Activated CD4-positive, alpha-beta T cell treated with anti-CD3 and anti-CD28 coated beads for 36 hours (primary cell): ENCODE measurements at regions of chr12 and their contacts with region 1.

Region 1: DNA sequence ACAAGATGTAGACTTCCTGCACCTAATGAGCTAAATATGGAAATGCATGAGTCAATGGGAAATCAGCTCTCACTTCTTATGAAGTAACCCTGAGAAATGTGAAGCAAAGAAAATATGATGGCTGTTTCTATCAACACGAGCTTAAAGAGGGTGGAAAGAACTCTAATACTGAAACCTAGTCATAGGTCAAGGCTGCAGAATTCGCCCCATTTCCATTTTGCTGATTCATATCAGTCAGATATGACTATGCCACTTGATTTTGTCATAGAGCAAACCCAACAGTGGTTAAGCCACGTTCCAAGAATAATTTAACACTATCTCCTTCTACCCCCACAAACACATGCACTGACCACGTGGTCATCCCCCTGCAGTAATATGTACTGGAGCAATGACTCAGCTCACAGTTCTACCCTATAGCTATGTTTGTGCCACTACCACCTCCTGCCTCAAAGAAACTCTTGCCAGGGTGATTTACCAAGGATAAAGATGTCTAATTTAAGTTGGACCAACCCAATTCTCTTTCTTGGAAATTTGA is 157.5 kb downstream of the TMTC3 start:
- DNase-seq: peak; percentile 79
- ATAC-seq: peak; percentile 90
- H3K4me3 Mint-ChIP-seq: no peak overlapping the region
- H3K27ac Mint-ChIP-seq: peak overlapping the region; percentile 91
- H3K4me1 Mint-ChIP-seq: peaks cover 31% of the 10 kb centered on the region
- H3K27me3 Mint-ChIP-seq: peaks cover 4% of the 10 kb centered on the region

Region 2: DNA sequence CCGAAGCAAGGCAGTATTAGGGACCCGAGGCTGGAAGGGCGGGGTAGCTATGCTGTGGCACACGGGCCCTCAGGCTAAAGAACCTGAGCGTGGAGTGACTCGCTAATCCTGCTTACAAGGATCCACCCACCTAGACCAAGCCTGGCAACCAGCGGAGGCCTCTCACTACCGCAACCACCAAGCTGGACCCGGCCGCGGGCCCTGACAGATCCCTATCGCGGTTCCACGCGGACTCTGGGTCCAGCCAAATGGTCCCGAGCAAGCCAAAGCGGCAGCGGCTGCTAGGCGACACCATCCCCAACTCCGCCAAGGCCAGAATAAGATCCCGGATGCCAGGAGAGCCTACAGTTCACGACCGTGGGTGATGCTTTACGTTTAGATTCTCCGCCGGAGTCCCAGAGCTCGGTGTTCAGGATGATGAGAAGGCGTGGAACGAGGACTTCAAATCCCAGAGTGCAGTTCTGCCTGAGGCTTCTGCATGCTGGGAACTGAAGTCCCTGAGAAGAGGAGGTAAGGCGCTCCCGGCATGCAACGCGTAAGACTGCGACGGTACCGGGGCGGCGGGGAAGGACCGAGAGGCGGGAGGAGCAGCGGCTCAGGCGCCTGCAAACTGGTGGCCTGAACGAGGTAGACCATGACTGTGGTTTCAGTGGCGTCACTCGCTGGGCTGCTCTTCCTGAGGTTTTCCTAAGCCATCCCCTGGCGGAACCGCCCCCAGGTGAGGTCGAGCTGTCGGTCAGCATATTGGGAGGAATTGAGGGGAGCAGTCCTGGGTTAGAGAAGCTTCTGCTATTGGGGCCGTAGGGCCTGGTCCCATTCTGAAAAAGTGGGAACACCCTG is 157.6 kb before region 1 on chr12 and contains the starts of genes CEP290 and TMTC3:
- CTCF ChIA-PET with region 1: interaction called, 3 read pairs
- POLR2A ChIA-PET with region 1: interaction called, 3 read pairs
- intact Hi-C with region 1: loop called (anchors 1 to 2 kb)
- DNase-seq: peak; percentile 95
- ATAC-seq: peak; percentile 98
- H3K4me3 Mint-ChIP-seq: peak within 1 kb of the TSS; percentile 94
- H3K27ac Mint-ChIP-seq: peak within 1 kb of the TSS; percentile 92
- H3K4me1 Mint-ChIP-seq: peaks cover 42% of the 10 kb centered on the region
- H3K27me3 Mint-ChIP-seq: no peaks in the 10 kb centered on the region
- total RNA-seq, gene CEP290: 15.5 to 17.0 TPM
- total RNA-seq, gene TMTC3: 5.8 to 6.2 TPM

Region 3: DNA sequence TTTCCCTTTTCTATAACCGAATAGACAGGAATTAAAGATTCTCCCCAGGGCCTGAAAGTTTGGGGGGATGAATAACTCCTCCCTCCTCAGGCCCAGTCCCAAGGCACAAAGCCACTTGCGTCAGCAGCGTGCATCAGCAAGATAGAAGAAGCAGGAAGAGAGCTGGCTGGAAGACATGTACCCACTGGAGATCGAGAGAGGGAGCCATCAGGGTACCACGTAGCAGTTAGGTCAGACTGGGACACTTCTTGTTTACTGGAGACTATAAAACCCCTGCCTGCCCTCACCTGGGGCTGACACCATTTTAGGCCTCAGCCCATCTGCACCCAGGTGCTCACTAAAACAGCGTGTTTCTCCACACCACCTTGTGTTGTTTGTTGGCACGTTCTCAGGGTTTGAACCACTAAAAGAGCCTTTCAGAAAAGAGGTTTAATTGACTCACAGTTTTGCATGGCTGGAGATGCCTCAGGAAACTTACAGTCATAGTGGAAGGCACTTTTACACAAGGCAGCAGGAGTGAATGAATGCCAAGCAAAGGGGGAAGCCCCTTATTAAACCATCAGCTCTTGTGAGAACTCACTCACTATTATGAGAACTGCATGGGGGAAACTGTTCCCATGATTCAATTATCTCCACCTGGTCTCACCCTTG is 64.3 kb before region 1 on chr12:
- CTCF ChIA-PET with region 1: interaction called, 4 read pairs
- POLR2A ChIA-PET with region 1: interaction called, 3 read pairs
- intact Hi-C with region 1: loop called (anchors 1 kb)
- DNase-seq: peak; percentile 58
- ATAC-seq: peak; percentile 85
- H3K4me3 Mint-ChIP-seq: no peak overlapping the region
- H3K27ac Mint-ChIP-seq: peak overlapping the region; percentile 78
- H3K4me1 Mint-ChIP-seq: peaks cover 36% of the 10 kb centered on the region
- H3K27me3 Mint-ChIP-seq: no peaks in the 10 kb centered on the region

Region 4: GRCh38 chr12:88393017-88393767 is 93.6 kb after region 1 on chr12:
- CTCF ChIA-PET with region 1: no interaction called
- POLR2A ChIA-PET with region 1: no interaction called
- intact Hi-C with region 1: loop called (anchors 1 kb)
- DNase-seq: no peak
- ATAC-seq: peak; percentile 37
- H3K4me3 Mint-ChIP-seq: no peak overlapping the region
- H3K27ac Mint-ChIP-seq: no peak overlapping the region
- H3K4me1 Mint-ChIP-seq: peaks cover 11% of the 10 kb centered on the region
- H3K27me3 Mint-ChIP-seq: peaks cover 11% of the 10 kb centered on the region

Region 5: GRCh38 chr12:88658009-88658408 is 358.4 kb after region 1 on chr12:
- CTCF ChIA-PET with region 1: no interaction called
- POLR2A ChIA-PET with region 1: no interaction called
- intact Hi-C with region 1: no loop called
- DNase-seq: no peak
- ATAC-seq: no peak
- H3K4me3 Mint-ChIP-seq: no peak overlapping the region
- H3K27ac Mint-ChIP-seq: no peak overlapping the region
- H3K4me1 Mint-ChIP-seq: no peaks in the 10 kb centered on the region
- H3K27me3 Mint-ChIP-seq: peaks cover 2% of the 10 kb centered on the region

Region 6: GRCh38 chr12:89494411-89495231 is 1195.0 kb after region 1 on chr12:
- CTCF ChIA-PET with region 1: no interaction called
- POLR2A ChIA-PET with region 1: no interaction called
- intact Hi-C with region 1: loop called in 1 of 2 experiments (anchors 2 kb)
- DNase-seq: peak; percentile 72
- ATAC-seq: peak; percentile 90
- H3K4me3 Mint-ChIP-seq: peak overlapping the region; percentile 28
- H3K27ac Mint-ChIP-seq: peak overlapping the region; percentile 92
- H3K4me1 Mint-ChIP-seq: peaks cover 27% of the 10 kb centered on the region
- H3K27me3 Mint-ChIP-seq: no peaks in the 10 kb centered on the region